CD4-positive, alpha-beta T cell (primary cell): ENCODE measurements at regions of chr11 and their contacts with region 1.

Region 1: DNA sequence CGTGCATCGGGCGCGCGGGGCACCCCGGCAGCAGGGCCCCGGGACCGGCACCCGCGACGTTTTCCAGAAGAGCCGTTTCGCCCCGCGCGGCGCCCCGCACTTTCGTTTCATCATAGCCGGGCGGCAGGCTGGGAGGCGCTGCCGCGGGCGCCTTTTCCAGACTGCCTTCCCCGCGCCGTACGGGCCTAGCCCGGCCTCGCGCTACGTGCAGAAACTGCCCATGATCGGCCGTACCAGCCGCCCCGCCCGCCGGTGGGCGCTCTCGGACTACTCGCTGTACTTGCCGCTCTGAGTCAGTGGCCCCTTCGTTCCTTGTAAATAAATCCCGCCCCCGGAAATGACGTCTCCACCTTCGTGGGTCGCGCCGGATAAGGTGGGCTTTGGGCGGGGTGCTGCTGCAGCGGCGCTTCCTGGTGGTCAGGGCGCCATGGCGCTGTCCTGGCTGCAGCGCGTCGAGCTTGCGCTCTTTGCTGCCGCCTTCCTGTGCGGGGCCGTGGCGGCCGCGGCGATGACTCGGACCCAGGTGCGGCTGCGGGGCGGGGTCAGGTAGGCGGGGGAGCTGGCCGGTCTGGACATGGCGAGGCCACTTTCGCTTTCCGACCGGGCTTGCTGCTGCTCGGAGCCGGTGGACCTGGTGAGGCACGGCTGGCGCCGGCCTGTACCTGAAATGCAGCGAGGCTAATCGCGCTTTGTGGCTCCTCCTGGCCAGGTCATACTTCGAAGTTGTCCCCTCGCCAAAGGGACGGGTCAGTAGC is at the start of gene TMEM179B:
- DNase-seq: peak; percentile 90 to 99 (median 97)
- ATAC-seq: peak; percentile 61
- H3K4me3 ChIP-seq: peak within 1 kb of the TSS; percentile 77
- H3K4me3 Mint-ChIP-seq: peak within 1 kb of the TSS; percentile 98
- H3K27ac ChIP-seq: peak within 1 kb of the TSS; percentile 80 to 92
- H3K27ac Mint-ChIP-seq: peak within 1 kb of the TSS; percentile 98
- H3K4me1 ChIP-seq: peaks cover 53% of the 10 kb centered on the region
- H3K4me1 Mint-ChIP-seq: peaks cover 55% of the 10 kb centered on the region
- H3K27me3 ChIP-seq: no peaks in the 10 kb centered on the region
- H3K27me3 Mint-ChIP-seq: no peaks in the 10 kb centered on the region
- CTCF ChIP-seq: no peak
- total RNA-seq, gene TMEM179B: 34.7 to 37.4 TPM

Region 2: GRCh38 chr11:62411524-62411923 is 375.7 kb before region 1 on chr11:
- CTCF ChIA-PET with region 1: no interaction called
- POLR2A ChIA-PET with region 1: no interaction called
- intact Hi-C with region 1: no loop called
- DNase-seq: no peak
- ATAC-seq: no peak
- H3K4me3 ChIP-seq: no peak overlapping the region
- H3K4me3 Mint-ChIP-seq: no peak overlapping the region
- H3K27ac ChIP-seq: no peak overlapping the region
- H3K27ac Mint-ChIP-seq: no peak overlapping the region
- H3K4me1 ChIP-seq: no peaks in the 10 kb centered on the region
- H3K4me1 Mint-ChIP-seq: no peaks in the 10 kb centered on the region
- H3K27me3 ChIP-seq: no peaks in the 10 kb centered on the region
- H3K27me3 Mint-ChIP-seq: no peaks in the 10 kb centered on the region
- CTCF ChIP-seq: no peak

Region 3: DNA sequence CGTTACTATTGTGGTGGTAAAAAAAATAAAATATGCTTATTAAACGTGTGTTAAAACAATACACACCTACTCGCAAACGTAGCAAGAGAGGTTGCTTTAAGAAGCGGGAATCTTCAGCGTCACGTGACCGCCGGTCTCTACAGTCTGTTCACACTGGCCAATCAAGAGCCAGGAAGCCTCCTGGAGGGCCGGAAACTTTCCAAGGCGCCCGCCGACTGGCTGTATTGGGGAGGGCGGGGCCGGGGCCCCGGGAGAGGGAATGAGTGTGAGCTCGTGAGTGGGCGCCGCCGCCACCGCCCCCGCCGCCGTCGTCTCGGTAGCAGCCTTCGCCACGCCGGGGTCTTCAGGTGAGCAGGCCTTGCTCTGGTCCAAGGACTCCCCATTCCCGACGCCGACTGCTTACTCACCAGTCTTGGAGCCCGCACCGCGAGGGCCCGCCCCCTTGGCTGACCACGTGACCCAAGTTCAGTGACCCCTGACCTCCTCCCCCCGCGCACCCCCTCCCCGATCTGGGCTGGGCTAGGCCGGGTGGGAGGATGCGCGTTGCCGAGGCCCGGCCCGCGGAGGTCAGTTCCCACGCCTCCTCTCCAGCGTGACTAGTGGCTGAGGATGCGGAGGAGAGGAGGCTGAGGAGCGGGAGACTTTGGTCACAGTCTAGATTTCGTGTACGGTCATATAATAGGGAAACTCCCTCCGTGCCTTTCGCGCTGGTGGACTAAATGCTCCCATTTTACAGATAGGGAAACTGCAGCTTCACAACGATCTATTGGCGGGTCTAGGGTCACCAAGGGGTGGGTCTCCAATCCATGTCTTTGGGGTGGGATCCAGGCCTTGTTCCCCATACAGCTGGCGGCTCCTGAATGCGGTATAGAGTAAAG is 15.8 kb before region 1 on chr11 and contains the start of gene TAF6L:
- CTCF ChIA-PET with region 1: interaction called, 81 read pairs
- POLR2A ChIA-PET with region 1: interaction called, 41 read pairs
- intact Hi-C with region 1: loop called in 1 of 2 experiments (anchors 1 kb)
- DNase-seq: peak; percentile 81 to 95 (median 88)
- ATAC-seq: peak; percentile 76
- H3K4me3 ChIP-seq: peak within 1 kb of the TSS; percentile 76
- H3K4me3 Mint-ChIP-seq: peak within 1 kb of the TSS; percentile 97
- H3K27ac ChIP-seq: peak within 1 kb of the TSS; percentile 79 to 88
- H3K27ac Mint-ChIP-seq: peak within 1 kb of the TSS; percentile 97
- H3K4me1 ChIP-seq: peaks cover 27% of the 10 kb centered on the region
- H3K4me1 Mint-ChIP-seq: peaks cover 24% of the 10 kb centered on the region
- H3K27me3 ChIP-seq: no peaks in the 10 kb centered on the region
- H3K27me3 Mint-ChIP-seq: no peaks in the 10 kb centered on the region
- CTCF ChIP-seq: no peak
- total RNA-seq, gene TAF6L: 11.5 to 11.8 TPM

Region 4: DNA sequence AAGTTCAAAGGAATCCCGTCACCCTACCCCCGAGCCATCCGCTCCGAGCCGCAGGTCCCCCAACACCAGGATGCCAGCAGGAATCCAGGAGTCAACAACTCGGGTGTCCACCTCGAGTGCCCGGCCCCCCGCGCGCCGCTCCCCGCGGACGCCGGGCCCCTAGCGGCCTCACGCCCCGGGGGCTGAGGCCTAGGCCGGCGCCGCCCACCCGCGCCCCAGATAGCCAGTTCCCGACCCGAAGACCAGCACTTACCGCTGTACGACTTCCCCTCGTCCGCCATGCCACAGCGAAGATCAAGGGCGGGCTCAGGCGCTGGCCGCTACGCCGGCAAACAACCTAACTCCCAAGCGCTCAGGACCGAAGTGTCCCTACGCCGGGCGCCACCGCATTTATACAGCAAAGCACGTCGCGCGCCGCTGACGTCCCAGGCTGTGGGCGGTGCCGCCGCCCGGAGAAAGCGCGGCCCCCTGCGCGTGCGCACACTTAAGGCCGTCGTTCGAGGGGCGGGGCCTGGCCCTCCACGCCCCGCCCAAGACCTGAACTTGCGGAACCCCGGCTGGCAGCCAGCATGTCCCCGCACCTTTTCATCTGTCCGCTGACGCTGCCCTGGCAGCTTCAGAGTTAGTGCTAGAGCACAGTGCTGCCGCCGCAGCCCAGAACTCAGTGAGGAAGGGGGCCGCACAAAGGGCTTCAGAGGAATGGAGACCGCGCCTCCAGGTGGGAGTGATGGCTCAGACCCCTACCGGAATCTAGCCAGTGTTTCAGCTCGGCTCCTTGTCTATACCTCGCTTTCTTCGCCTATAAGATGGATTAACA is 18.1 kb after region 1 on chr11 and contains the start of gene NXF1:
- CTCF ChIA-PET with region 1: interaction called, 32 read pairs
- POLR2A ChIA-PET with region 1: interaction called, 22 read pairs
- intact Hi-C with region 1: loop called (anchors 1 kb)
- DNase-seq: peak; percentile 88 to 98 (median 96)
- ATAC-seq: peak; percentile 82
- H3K4me3 ChIP-seq: peak within 1 kb of the TSS; percentile 70
- H3K4me3 Mint-ChIP-seq: peak within 1 kb of the TSS; percentile 98
- H3K27ac ChIP-seq: peak within 1 kb of the TSS; percentile 60 to 83
- H3K27ac Mint-ChIP-seq: peak within 1 kb of the TSS; percentile 97
- H3K4me1 ChIP-seq: peaks cover 36% of the 10 kb centered on the region
- H3K4me1 Mint-ChIP-seq: peaks cover 41% of the 10 kb centered on the region
- H3K27me3 ChIP-seq: no peaks in the 10 kb centered on the region
- H3K27me3 Mint-ChIP-seq: no peaks in the 10 kb centered on the region
- CTCF ChIP-seq: no peak
- total RNA-seq, gene NXF1: 343 to 358 TPM

Region 5: GRCh38 chr11:62855571-62856332 is 68.6 kb after region 1 on chr11:
- CTCF ChIA-PET with region 1: interaction called, 58 read pairs
- POLR2A ChIA-PET with region 1: interaction called, 158 read pairs
- intact Hi-C with region 1: no loop called
- DNase-seq: peak; percentile 96 to 99 (median 98)
- ATAC-seq: peak; percentile 92
- H3K4me3 ChIP-seq: peak overlapping the region; percentile 79
- H3K4me3 Mint-ChIP-seq: peak overlapping the region; percentile 98
- H3K27ac ChIP-seq: peak overlapping the region; percentile 66 to 72
- H3K27ac Mint-ChIP-seq: peak overlapping the region; percentile 90
- H3K4me1 ChIP-seq: peaks cover 41% of the 10 kb centered on the region
- H3K4me1 Mint-ChIP-seq: peaks cover 63% of the 10 kb centered on the region
- H3K27me3 ChIP-seq: no peaks in the 10 kb centered on the region
- H3K27me3 Mint-ChIP-seq: no peaks in the 10 kb centered on the region
- CTCF ChIP-seq: no peak

Region 6: DNA sequence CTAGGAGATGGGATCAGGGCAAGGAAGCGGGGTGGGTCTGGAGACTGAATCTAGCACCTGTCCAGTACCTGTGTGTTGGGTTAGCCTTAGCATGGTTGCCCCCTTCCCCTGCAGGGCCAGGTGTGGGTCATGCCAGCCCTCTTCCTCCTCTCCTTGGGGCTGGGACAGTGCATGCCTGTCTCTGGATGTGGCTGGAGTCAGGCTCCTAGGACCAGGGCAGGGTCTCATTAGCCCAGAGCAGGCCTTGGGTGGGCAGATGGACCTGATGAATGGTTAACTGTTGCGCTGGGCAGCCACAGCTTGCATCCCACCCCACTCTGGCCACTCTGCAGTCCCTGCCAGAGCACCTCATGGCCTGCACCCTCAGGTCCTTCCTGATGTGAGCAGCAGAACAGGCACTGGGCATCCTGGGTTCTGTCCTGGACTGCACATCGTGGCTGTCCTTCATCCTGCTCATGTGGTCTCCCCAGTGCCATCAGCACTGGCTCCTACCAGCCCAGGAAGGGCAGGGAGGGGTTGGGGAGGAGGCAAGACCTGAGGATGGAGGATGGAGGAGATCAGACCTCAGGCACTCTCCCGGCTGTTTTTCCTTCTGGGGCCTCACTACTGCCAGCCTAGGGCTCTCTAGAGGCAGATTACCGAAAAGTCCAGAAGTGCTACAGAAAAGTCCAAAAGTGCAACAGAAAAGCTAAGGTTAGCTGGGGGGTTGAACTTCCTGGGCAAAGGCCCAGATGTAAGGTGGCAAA is 146.7 kb after region 1 on chr11:
- CTCF ChIA-PET with region 1: no interaction called
- POLR2A ChIA-PET with region 1: no interaction called
- intact Hi-C with region 1: no loop called
- DNase-seq: no peak
- ATAC-seq: no peak
- H3K4me3 ChIP-seq: no peak overlapping the region
- H3K4me3 Mint-ChIP-seq: no peak overlapping the region
- H3K27ac ChIP-seq: no peak overlapping the region
- H3K27ac Mint-ChIP-seq: no peak overlapping the region
- H3K4me1 ChIP-seq: no peaks in the 10 kb centered on the region
- H3K4me1 Mint-ChIP-seq: no peaks in the 10 kb centered on the region
- H3K27me3 ChIP-seq: peaks cover 11 to 27% of the 10 kb centered on the region in 2 experiments
- H3K27me3 Mint-ChIP-seq: peaks cover 30% of the 10 kb centered on the region
- CTCF ChIP-seq: no peak

Region 7: GRCh38 chr11:63277345-63277943 is 490.3 kb after region 1 on chr11:
- CTCF ChIA-PET with region 1: no interaction called
- POLR2A ChIA-PET with region 1: no interaction called
- intact Hi-C with region 1: no loop called
- DNase-seq: peak in 1 of 14 experiments; percentile 3
- ATAC-seq: no peak
- H3K4me3 ChIP-seq: no peak overlapping the region
- H3K4me3 Mint-ChIP-seq: no peak overlapping the region
- H3K27ac ChIP-seq: no peak overlapping the region
- H3K27ac Mint-ChIP-seq: no peak overlapping the region
- H3K4me1 ChIP-seq: no peaks in the 10 kb centered on the region
- H3K4me1 Mint-ChIP-seq: no peaks in the 10 kb centered on the region
- H3K27me3 ChIP-seq: peaks cover 8 to 18% of the 10 kb centered on the region in 2 experiments
- H3K27me3 Mint-ChIP-seq: peaks cover 38% of the 10 kb centered on the region
- CTCF ChIP-seq: no peak